ENCODE measurements at regions of chr17 and their contacts with region 1.

Region 1: GRCh38 chr17:67343251-67343650 is 23.1 kb downstream of the PSMD12 start:
- DNase-seq: no peak
- ATAC-seq: no peak
- H3K4me3 Mint-ChIP-seq: no peak overlapping the region
- H3K27ac Mint-ChIP-seq: peak overlapping the region; percentile 11
- H3K4me1 Mint-ChIP-seq: no peaks in the 10 kb centered on the region
- H3K27me3 Mint-ChIP-seq: no peaks in the 10 kb centered on the region
- CTCF ChIP-seq: no peak

Region 2: GRCh38 chr17:67353929-67354574 is 10.8 kb after region 1 on chr17:
- CTCF ChIA-PET with region 1: interaction called, 4 read pairs
- POLR2A ChIA-PET with region 1: interaction called, 30 read pairs
- intact Hi-C with region 1: no loop called
- DNase-seq: no peak
- ATAC-seq: no peak
- H3K4me3 Mint-ChIP-seq: no peak overlapping the region
- H3K27ac Mint-ChIP-seq: no peak overlapping the region
- H3K4me1 Mint-ChIP-seq: peaks cover 19% of the 10 kb centered on the region
- H3K27me3 Mint-ChIP-seq: no peaks in the 10 kb centered on the region
- CTCF ChIP-seq: no peak

Measured in activated CD8-positive, alpha-beta T cell treated with anti-CD3 and anti-CD28 coated beads for 36 hours (primary cell).